Esophagus muscularis mucosa (tissue), 4 donors: ENCODE measurements at regions of chr1 and their contacts with region 1.

Region 1: GRCh38 chr1:244835276-244836134 is at the start of gene COX20:
- DNase-seq: peak; percentile 97
- H3K4me3 ChIP-seq: peak within 1 kb of the TSS; percentile 75 to 86 (median 85)
- H3K27ac ChIP-seq: peak within 1 kb of the TSS; percentile 99 to 100 (median 100)
- H3K4me1 ChIP-seq: peaks cover 34 to 51% (median 50%) of the 10 kb centered on the region in 4 donors
- H3K27me3 ChIP-seq: no peaks in the 10 kb centered on the region
- CTCF ChIP-seq: no peak
- EP300 ChIP-seq: no peak
- POLR2A ChIP-seq: peak; percentile 23
- total RNA-seq, gene COX20: 74.8 to 125 (median 101) TPM

Region 2: GRCh38 chr1:244864253-244865027 is 28.9 kb after region 1 on chr1 and contains the start of gene HNRNPU:
- intact Hi-C with region 1: loop called (anchors 1 kb)
- DNase-seq: peak; percentile 98
- H3K4me3 ChIP-seq: peak within 1 kb of the TSS; percentile 97 to 100 (median 99)
- H3K27ac ChIP-seq: peak within 1 kb of the TSS; percentile 100
- H3K4me1 ChIP-seq: peaks cover 30 to 48% (median 44%) of the 10 kb centered on the region in 4 donors
- H3K27me3 ChIP-seq: no peaks in the 10 kb centered on the region
- CTCF ChIP-seq: peak in 2 of 3 experiments; percentile 27 to 36
- EP300 ChIP-seq: peak; percentile 90
- POLR2A ChIP-seq: peak; percentile 97
- total RNA-seq, gene HNRNPU: 255 to 306 (median 279) TPM